ENCODE measurements at regions of chr12 and their contacts with region 1.

Region 1: DNA sequence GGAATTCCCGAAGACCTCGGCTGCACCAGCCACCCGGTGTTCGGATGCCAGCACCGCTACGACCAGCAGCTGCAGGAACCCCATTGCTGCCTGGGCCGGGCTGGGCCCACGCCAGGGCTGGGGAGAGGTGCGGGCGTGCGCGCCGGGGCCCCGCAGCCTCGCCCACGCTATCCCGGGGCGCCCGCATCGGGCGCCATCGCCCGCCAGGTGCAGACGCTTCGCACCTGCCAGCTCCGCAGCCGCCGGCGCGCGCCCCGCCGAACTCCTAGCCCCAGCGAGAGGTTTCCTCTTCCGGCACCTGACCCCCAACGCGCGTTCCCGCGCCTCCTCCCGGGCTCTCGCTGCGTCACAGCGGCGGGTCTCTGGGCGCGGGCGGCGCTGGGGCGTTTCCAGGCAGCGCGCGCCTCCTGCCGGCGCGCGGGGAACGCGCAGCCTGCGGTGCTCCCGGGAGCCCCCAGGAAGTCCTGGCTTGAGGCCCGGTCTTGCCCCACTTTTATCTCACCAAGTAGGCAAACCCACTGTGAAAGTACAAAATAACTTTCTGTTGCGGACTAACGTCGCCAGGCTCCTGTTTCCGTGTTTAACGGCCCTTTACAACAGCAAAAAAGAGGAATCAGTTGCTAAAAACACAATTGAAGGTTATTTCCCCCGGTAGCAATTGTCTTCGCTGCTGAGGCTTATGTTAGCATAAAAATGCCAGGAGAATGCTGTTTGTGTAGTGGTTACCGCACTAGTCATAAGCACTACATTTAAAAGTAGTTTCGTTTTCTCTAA is at the start of gene TM7SF3:
- DNase-seq: peak; percentile 81
- ATAC-seq: peak; percentile 80
- H3K4me3 ChIP-seq: peak within 1 kb of the TSS; percentile 78
- H3K27ac ChIP-seq: peak within 1 kb of the TSS; percentile 94
- H3K4me1 ChIP-seq: peaks cover 16% of the 10 kb centered on the region
- H3K27me3 ChIP-seq: no peaks in the 10 kb centered on the region
- CTCF ChIP-seq: peak; percentile 85 to 99 (median 99)
- EP300 ChIP-seq: no peak
- POLR2A ChIP-seq: peak; percentile 81
- RAD21 ChIP-seq: peak; percentile 78
- polyA plus RNA-seq, gene TM7SF3: 31.4 to 34.1 TPM

Region 2: DNA sequence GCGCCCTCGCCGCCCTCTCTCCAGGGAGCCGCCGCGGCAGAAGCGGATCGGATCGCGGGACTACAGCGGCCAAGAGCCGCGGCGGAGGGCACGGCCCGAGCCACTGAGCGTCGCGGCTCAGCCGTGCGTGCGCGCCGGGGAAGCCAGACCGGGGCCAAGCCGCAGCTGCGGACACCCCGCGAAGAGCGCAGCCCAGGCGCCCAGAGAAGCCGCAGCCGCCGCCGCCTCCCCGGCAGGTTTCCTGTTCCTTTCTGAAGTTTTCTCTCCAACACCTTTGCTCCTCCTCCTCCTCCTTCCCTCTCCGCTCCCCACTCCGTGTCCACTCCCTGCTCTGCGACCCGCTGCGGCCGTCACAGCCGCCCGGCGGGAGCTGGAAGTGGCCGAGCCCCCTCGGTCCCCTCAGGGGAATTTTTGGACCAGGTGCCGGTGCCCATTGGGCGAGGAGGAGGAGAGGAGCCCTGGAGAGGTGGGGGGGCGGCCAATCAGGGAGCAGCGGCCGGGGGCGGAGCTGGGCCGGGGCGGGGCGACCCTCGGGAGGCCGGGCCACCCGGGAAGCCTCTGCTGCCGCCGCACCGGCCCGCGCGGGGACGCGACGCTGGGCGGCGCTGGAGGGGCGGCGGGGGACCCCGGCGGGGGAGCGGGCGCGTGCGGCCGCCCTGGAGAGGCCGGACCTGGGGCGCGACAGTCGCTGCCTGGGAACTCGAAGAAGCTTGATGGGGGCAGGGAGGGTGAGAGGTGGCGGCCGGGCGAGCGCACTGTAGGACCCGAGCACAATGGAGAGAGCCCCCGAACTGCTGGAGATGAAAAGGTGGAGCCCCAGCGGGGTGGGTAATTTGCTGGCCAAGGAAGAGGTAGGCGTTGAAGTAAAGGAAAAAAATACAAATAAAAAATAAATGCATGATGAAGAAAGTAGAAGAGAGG is 181.2 kb before region 1 on chr12 and contains the start of gene ITPR2:
- CTCF ChIA-PET with region 1: interaction called, 9 read pairs
- POLR2A ChIA-PET with region 1: interaction called, 6 read pairs
- RAD21 ChIA-PET with region 1: interaction called, 44 read pairs
- SMC1A ChIA-PET with region 1: interaction called, 3 read pairs
- in situ Hi-C with region 1: no loop called
- intact Hi-C with region 1: loop called (anchors 2 kb)
- DNase-seq: peak; percentile 60
- ATAC-seq: peak; percentile 84
- H3K4me3 ChIP-seq: peak within 1 kb of the TSS; percentile 87
- H3K27ac ChIP-seq: peak within 1 kb of the TSS; percentile 80
- H3K4me1 ChIP-seq: peaks cover 5% of the 10 kb centered on the region
- H3K27me3 ChIP-seq: no peaks in the 10 kb centered on the region
- CTCF ChIP-seq: peak; percentile 20 to 51 (median 21); a peak in 3 of 6 replicates
- EP300 ChIP-seq: no peak
- POLR2A ChIP-seq: peak; percentile 87
- RAD21 ChIP-seq: peak; percentile 61
- polyA plus RNA-seq, gene ITPR2: 7.5 to 10.9 TPM

Region 3: DNA sequence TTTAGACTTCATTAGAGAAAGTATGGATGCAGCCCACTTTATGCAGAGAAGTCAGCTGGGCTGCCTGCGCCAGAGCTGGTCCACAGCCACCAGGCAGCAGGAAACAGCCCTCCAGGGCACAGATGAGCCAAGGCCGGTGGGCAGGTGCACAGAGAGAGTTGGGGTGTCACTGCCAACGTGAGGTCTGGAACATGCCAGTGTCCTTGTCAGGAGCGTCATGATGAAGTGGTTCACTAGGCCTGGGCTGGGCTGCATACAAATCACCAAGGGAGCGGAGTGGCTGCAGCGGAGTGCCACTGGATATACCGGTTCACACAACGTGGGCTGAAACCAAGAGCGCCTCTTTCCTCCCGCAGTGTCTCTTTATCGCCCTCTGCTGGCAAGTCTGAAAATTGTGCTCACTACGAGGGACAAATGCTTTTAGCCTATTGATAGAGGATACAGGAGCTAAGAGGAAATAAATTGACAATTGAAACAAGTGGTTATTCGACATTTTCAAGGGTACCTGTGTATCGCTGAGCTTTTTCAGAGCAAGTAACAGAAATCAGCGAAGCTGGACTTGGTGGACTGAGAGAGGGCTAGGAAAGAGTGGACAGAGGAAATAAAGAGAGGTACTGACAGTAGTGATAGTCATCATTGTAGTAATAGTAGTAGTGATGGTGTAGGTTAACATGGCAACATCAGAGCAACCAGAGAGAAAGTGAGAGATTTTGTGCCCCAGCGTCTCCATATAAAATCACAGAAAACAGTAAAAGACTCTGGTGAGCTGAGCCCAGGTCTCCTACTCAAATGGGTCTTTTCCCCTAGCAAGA is 129.3 kb before region 1 on chr12:
- CTCF ChIA-PET with region 1: interaction called, 72 read pairs
- POLR2A ChIA-PET with region 1: interaction called, 3 read pairs
- RAD21 ChIA-PET with region 1: interaction called, 28 read pairs
- SMC1A ChIA-PET with region 1: interaction called, 36 read pairs
- in situ Hi-C with region 1: no loop called
- intact Hi-C with region 1: no loop called
- DNase-seq: peak; percentile 65
- ATAC-seq: peak; percentile 98
- H3K4me3 ChIP-seq: no peak overlapping the region
- H3K27ac ChIP-seq: no peak overlapping the region
- H3K4me1 ChIP-seq: peaks cover 4% of the 10 kb centered on the region; the same call in 1 of the 2 replicates
- H3K27me3 ChIP-seq: no peaks in the 10 kb centered on the region
- CTCF ChIP-seq: peak; percentile 95 to 98 (median 98)
- EP300 ChIP-seq: no peak
- POLR2A ChIP-seq: no peak
- RAD21 ChIP-seq: peak; percentile 96

Region 4: DNA sequence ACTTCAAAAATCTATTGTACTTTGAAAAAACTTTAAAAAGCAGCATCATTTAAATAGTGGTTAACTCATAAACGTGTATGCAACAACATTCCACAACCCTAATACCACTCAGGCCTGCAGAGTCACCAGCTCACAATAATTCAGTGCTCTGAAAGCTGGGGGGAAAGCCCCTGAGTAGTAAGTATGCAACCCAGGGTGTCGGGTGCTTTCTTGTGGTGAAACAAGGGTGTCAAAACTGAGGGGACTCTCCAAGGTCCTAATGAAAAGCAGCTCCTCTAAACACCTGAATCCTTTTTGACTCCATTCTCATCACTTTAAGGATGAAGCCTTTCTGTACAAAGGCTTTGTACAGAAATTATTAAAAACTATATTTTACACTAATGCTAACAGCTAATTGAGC is 42.3 kb before region 1 on chr12:
- CTCF ChIA-PET with region 1: interaction called, 14 read pairs
- POLR2A ChIA-PET with region 1: interaction called, 4 read pairs
- RAD21 ChIA-PET with region 1: interaction called, 25 read pairs
- SMC1A ChIA-PET with region 1: interaction called, 12 read pairs
- in situ Hi-C with region 1: no loop called
- intact Hi-C with region 1: loop called (anchors 1 kb)
- DNase-seq: peak; percentile 72
- ATAC-seq: peak; percentile 100
- H3K4me3 ChIP-seq: no peak overlapping the region
- H3K27ac ChIP-seq: peak overlapping the region; percentile 35; the same call in 1 of the 2 replicates
- H3K4me1 ChIP-seq: peaks cover 7% of the 10 kb centered on the region
- H3K27me3 ChIP-seq: no peaks in the 10 kb centered on the region
- CTCF ChIP-seq: peak in 1 of 3 experiments; percentile 35; a peak in 2 of 6 replicates
- EP300 ChIP-seq: peak; percentile 37 to 65; a peak in 2 of 4 replicates
- POLR2A ChIP-seq: no peak
- RAD21 ChIP-seq: peak; percentile 43; the same call in 1 of the 2 replicates

Region 5: GRCh38 chr12:27034607-27035293 is 20.5 kb after region 1 on chr12:
- CTCF ChIA-PET with region 1: interaction called, 13 read pairs
- POLR2A ChIA-PET with region 1: no interaction called
- RAD21 ChIA-PET with region 1: interaction called, 3 read pairs
- SMC1A ChIA-PET with region 1: interaction called, 3 read pairs
- in situ Hi-C with region 1: no loop called
- intact Hi-C with region 1: no loop called
- DNase-seq: no peak
- ATAC-seq: no peak
- H3K4me3 ChIP-seq: no peak overlapping the region
- H3K27ac ChIP-seq: no peak overlapping the region
- H3K4me1 ChIP-seq: no peaks in the 10 kb centered on the region
- H3K27me3 ChIP-seq: no peaks in the 10 kb centered on the region
- CTCF ChIP-seq: no peak
- EP300 ChIP-seq: no peak
- POLR2A ChIP-seq: no peak
- RAD21 ChIP-seq: no peak

Region 6: DNA sequence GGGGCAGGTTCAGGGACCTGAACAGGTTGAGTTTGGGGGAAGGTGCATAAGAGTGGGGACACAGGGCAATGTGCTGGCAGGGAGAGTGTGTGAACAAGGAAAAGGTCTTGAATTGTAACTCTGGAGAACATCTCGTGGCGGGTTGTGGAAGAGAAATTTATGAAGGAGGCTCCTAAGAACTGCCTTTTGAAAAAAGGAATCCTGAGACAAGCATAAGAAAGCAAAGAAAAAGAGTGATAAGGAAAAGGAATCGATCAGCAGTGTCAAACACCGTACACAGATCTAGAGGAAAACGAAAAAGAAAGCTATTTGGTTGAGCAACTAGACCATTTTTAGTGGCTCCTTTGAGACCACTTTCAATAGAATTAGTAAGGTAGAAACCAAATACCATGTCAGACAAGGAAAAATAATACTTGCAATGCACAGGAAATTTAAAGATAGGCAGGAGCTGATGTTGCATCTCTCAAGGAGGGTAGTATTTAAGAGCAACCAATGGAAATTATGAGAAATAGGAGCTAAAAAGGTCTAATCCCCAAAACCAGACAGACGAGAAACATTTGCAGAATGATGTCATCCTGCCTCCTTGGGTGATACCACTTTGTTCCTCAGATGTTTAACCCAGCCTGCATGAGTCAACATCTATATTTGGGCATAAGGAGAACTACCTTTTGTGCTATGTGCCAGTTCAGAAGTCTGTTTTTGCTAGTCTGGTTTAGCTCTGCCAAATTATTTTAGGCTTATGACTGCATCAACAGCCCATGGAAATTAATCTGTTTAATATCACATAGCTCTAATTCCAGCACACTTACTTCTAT is 165.3 kb after region 1 on chr12:
- CTCF ChIA-PET with region 1: interaction called, 5 read pairs
- POLR2A ChIA-PET with region 1: no interaction called
- RAD21 ChIA-PET with region 1: interaction called, 24 read pairs
- SMC1A ChIA-PET with region 1: interaction called, 10 read pairs
- in situ Hi-C with region 1: no loop called
- intact Hi-C with region 1: no loop called
- DNase-seq: peak; percentile 96
- ATAC-seq: peak; percentile 94
- H3K4me3 ChIP-seq: peak overlapping the region; percentile 23
- H3K27ac ChIP-seq: peak overlapping the region; percentile 94
- H3K4me1 ChIP-seq: peaks cover 37% of the 10 kb centered on the region
- H3K27me3 ChIP-seq: no peaks in the 10 kb centered on the region
- CTCF ChIP-seq: no peak
- EP300 ChIP-seq: peak; percentile 27 to 48; a peak in 1 of 4 replicates
- POLR2A ChIP-seq: 0 out of 2 replicates have a peak, but pooled peaks have one; percentile 22
- RAD21 ChIP-seq: no peak

Region 7: GRCh38 chr12:27383429-27384260 is 369.4 kb after region 1 on chr12:
- CTCF ChIA-PET with region 1: interaction called, 39 read pairs
- POLR2A ChIA-PET with region 1: interaction called, 4 read pairs
- RAD21 ChIA-PET with region 1: interaction called, 17 read pairs
- SMC1A ChIA-PET with region 1: interaction called, 19 read pairs
- in situ Hi-C with region 1: no loop called
- intact Hi-C with region 1: loop called (anchors 5 kb)
- DNase-seq: peak; percentile 43
- ATAC-seq: peak; percentile 94
- H3K4me3 ChIP-seq: no peak overlapping the region
- H3K27ac ChIP-seq: no peak overlapping the region
- H3K4me1 ChIP-seq: no peaks in the 10 kb centered on the region
- H3K27me3 ChIP-seq: no peaks in the 10 kb centered on the region
- CTCF ChIP-seq: peak; percentile 84 to 95 (median 91)
- EP300 ChIP-seq: no peak
- POLR2A ChIP-seq: no peak
- RAD21 ChIP-seq: peak; percentile 83